BJ (cell line): ENCODE measurements at regions of chr17 and their contacts with region 1.

Region 1: DNA sequence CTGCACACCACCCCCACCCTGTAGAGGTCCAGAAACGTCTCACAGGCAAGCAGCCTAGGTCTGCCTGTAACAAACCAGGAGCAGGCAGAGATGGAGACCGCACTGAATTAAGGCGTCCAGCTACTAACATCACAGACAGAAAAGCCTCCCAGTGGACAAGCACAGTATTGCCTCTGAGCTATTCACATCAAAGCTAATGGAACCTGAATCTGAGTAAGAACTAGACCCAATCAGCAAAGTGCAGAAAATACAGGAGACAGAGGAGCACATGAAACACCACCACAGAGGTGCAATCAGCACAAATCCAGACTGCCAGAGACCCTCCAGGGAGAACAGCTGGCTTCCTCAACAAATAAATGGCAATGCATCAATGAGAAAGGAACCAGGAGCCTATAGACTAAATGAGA is 22.2 kb upstream of the PEMT start:
- DNase-seq: no peak
- H3K4me3 ChIP-seq: no peak overlapping the region
- H3K27me3 ChIP-seq: no peaks in the 10 kb centered on the region
- CTCF ChIP-seq: peak; percentile 82

Region 2: DNA sequence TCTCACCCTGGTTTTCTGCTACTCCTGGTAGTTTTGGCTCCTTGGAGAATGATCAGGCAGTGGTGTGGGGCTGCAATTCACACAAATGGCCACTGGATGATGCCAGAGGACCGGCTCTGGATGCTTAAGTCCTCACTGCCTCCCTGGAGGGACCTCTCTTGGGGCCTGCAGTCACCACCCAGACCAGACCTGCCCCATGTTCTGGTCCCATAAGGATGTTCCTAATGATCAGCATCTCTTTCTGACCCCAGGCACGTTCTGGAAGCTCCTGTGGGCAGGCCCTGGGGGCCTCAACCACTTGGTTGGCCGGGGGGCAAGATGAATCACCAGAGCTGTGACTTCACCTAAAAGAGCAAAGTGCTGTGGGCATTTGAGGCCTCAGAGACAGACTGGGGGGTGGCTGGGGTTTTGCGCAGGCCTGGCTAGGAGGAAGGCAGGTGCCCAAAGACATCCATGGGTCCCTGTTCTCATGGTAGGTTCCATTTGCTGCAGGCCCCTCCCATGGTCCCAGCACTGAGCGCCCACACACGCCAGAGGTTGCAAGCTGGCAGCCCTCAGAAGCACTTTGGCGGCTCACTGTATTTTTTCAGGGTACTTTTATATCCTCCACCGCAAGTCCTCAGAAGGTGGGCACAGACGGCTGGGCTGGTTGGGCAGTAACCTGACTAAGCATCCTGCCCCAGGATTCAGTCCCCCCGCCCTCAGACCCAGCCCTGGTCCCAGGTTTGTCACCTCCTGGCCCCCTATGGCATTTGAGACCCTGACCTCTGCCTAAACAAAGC is 257.4 kb before region 1 on chr17:
- CTCF ChIA-PET with region 1: interaction called, 43 read pairs
- POLR2A ChIA-PET with region 1: no interaction called
- DNase-seq: no peak
- H3K4me3 ChIP-seq: no peak overlapping the region
- H3K27me3 ChIP-seq: no peaks in the 10 kb centered on the region; the same call in 1 of the 2 replicates
- CTCF ChIP-seq: peak; percentile 100

Region 3: GRCh38 chr17:17591355-17592298 is 22.1 kb before region 1 on chr17 and contains the start of gene PEMT:
- CTCF ChIA-PET with region 1: interaction called, 15 read pairs
- POLR2A ChIA-PET with region 1: no interaction called
- DNase-seq: peak; percentile 92
- H3K4me3 ChIP-seq: peak within 1 kb of the TSS; percentile 69
- H3K27me3 ChIP-seq: no peaks in the 10 kb centered on the region
- CTCF ChIP-seq: no peak
- polyA plus RNA-seq, gene PEMT: 29.8 and 50.7 TPM in 2 replicates

Region 4: GRCh38 chr17:17628388-17629008 is 14.8 kb after region 1 on chr17:
- CTCF ChIA-PET with region 1: interaction called, 14 read pairs
- POLR2A ChIA-PET with region 1: interaction called, 13 read pairs
- DNase-seq: no peak
- H3K4me3 ChIP-seq: peak overlapping the region; percentile 24
- H3K27me3 ChIP-seq: peaks cover 2% of the 10 kb centered on the region; the same call in 1 of the 2 replicates
- CTCF ChIP-seq: no peak

Region 5: GRCh38 chr17:17723354-17724261 is 109.9 kb after region 1 on chr17:
- CTCF ChIA-PET with region 1: no interaction called
- POLR2A ChIA-PET with region 1: no interaction called
- DNase-seq: no peak
- H3K4me3 ChIP-seq: peak overlapping the region; percentile 47
- H3K27me3 ChIP-seq: no peaks in the 10 kb centered on the region
- CTCF ChIP-seq: no peak